Endothelial cell of umbilical vein (primary cell): ENCODE measurements at regions of chr1 and their contacts with region 1.

Region 1: DNA sequence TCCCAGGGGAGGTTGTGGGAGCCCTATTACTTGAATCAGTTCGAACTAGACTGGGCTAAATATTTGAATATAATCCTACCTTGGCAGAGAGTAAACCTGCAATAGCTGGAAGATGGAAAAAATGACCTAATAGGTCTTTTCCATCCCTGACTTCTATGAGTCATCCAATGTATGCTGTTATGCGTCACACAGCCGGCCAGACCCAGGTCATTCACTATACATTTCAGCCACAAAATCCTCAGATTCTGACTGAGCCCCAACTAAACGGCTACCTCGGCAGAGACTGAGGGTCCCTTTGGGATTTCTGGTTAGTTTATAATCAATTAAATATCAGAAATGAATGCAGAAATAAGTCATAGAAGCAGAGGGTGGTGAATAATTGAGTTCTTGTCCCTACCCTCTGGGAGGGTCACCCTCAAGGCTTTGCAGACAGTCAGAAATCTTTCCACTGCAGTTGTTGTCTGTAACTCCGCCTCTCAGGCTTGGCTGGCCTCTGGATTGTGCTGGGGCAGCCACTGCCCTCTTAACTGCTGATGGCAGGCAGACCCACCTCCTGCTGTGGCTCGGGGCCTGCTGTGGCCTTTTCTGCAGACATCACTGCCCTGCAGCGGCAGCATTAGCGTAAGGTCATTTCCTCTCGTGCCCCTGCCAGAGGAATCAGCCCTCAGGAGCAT is 240.5 kb downstream of the TGFB2 start:
- DNase-seq: peak; percentile 86
- H3K4me3 ChIP-seq: peak overlapping the region in 1 of 3 experiments; percentile 4
- H3K27ac ChIP-seq: peak overlapping the region; percentile 77
- H3K4me1 ChIP-seq: peaks cover 14% of the 10 kb centered on the region
- H3K27me3 ChIP-seq: no peaks in the 10 kb centered on the region
- CTCF ChIP-seq: no peak
- POLR2A ChIP-seq: peak; percentile 28

Region 2: DNA sequence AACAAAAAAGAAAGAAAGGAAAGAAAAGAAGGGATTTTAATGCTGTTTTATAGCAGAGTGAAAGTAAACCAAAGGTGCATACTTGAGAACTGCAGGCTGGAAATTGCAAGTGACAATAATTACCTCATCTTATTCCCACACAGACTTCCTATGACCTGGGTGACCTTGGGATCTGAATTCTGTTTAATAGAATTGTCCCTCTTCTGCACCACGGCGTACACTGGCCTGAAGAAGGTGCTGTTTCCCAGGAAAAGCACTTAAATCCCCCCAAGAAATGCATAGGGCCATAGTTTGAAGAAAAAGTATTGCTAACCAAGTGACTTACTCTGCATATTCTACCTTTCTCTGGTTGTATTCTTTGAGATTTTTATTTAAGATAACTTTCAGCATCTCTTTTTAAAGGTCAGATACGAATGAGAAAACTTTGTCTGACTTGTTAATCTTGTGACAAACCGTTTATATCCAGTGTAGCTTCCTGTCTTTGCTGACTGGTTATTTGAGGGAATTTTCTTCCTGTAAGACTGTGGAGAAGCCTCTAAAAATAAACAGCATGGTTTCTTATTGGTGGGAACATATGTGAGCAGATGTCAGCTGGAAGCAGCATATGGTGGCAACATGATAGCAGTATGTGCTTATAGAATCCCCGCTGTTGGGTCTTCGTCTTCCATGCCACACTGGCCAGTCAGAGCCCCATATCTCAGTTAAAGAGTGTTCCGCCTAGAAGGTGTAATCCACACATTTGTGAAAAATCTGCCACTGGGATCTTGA is 224.2 kb before region 1 on chr1:
- CTCF ChIA-PET with region 1: no interaction called
- POLR2A ChIA-PET with region 1: no interaction called
- dilution Hi-C with region 1: no loop called
- intact Hi-C with region 1: loop called (anchors 5 kb)
- DNase-seq: peak; percentile 81
- H3K4me3 ChIP-seq: no peak overlapping the region
- H3K27ac ChIP-seq: no peak overlapping the region
- H3K4me1 ChIP-seq: peaks cover 6% of the 10 kb centered on the region
- H3K27me3 ChIP-seq: no peaks in the 10 kb centered on the region
- CTCF ChIP-seq: peak; percentile 55 to 70
- POLR2A ChIP-seq: no peak

Region 3: DNA sequence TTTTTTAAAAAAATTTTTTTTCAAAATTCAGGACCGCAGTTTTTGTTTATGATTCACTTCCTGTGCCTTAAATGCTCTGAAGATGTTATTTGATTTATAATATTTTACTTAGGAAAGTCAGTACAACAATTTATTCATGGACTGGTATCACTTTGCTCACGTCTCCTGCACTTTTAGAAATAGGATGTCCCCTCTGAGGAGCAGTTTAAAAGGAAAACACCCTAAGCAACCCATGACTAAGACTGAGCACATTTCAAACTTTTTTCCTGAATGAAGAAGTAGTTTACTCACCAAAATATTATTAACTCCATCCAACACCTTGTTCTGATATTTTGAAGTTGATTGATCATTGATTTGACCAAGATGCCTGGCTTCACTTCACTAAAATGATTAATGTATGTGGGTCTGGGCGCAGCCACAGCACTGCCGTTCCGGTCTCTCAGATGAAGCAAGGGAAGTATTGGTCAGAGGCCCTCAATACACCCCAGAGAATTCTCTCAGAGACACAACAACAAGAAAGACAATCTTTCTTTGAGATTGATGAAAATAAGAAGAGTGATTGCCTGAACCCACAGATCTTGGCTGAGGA is 16.6 kb before region 1 on chr1:
- CTCF ChIA-PET with region 1: no interaction called
- POLR2A ChIA-PET with region 1: no interaction called
- dilution Hi-C with region 1: no loop called
- intact Hi-C with region 1: no loop called
- DNase-seq: peak; percentile 10
- H3K4me3 ChIP-seq: no peak overlapping the region
- H3K27ac ChIP-seq: no peak overlapping the region
- H3K4me1 ChIP-seq: peaks cover 6% of the 10 kb centered on the region
- H3K27me3 ChIP-seq: no peaks in the 10 kb centered on the region
- CTCF ChIP-seq: no peak
- POLR2A ChIP-seq: no peak